ENCODE measurements at regions of chr2 and their contacts with region 1.

Region 1: GRCh38 chr2:68751397-68752339 is 17.1 kb downstream of the ARHGAP25 start:
- DNase-seq: peak; percentile 83
- H3K4me3 ChIP-seq: peak overlapping the region in 1 of 2 experiments; percentile 34; a peak in 1 of 4 replicates
- H3K27ac ChIP-seq: no peak overlapping the region
- H3K4me1 ChIP-seq: no peaks in the 10 kb centered on the region
- H3K27me3 ChIP-seq: no peaks in the 10 kb centered on the region
- CTCF ChIP-seq: peak; percentile 92
- EP300 ChIP-seq: no peak
- RAD21 ChIP-seq: peak; percentile 94

Region 2: DNA sequence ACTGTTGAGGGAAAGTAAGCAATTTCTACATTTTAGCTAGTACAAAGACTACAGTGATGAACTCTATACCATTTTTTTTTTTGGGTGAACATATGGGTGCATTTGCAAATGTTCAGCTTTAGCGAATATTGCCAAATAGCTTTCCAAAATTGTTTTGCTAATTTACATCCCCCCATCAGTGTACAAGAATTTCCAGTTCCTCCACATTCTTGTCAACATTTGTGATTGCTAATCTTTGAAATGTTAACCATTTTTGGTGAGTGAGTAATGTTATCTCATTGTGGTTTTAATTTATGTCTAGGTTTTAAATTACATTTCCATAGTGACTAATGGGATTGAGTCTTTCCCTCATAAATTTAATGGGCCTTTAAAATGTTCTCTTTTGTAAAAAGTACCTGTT is 415.5 kb before region 1 on chr2:
- CTCF ChIA-PET with region 1: no interaction called
- POLR2A ChIA-PET with region 1: no interaction called
- DNase-seq: no peak
- H3K4me3 ChIP-seq: no peak overlapping the region
- H3K27ac ChIP-seq: no peak overlapping the region
- H3K4me1 ChIP-seq: no peaks in the 10 kb centered on the region
- H3K27me3 ChIP-seq: no peaks in the 10 kb centered on the region
- CTCF ChIP-seq: no peak
- EP300 ChIP-seq: no peak
- RAD21 ChIP-seq: no peak

Region 3: GRCh38 chr2:68548396-68548795 is 203.3 kb before region 1 on chr2:
- CTCF ChIA-PET with region 1: no interaction called
- POLR2A ChIA-PET with region 1: no interaction called
- DNase-seq: no peak
- H3K4me3 ChIP-seq: no peak overlapping the region
- H3K27ac ChIP-seq: no peak overlapping the region
- H3K4me1 ChIP-seq: no peaks in the 10 kb centered on the region
- H3K27me3 ChIP-seq: no peaks in the 10 kb centered on the region
- CTCF ChIP-seq: no peak
- EP300 ChIP-seq: no peak
- RAD21 ChIP-seq: no peak

Region 4: GRCh38 chr2:68637047-68637446 is 114.6 kb before region 1 on chr2:
- CTCF ChIA-PET with region 1: no interaction called
- POLR2A ChIA-PET with region 1: no interaction called
- DNase-seq: peak; percentile 67
- H3K4me3 ChIP-seq: no peak overlapping the region
- H3K27ac ChIP-seq: peak overlapping the region in 1 of 2 experiments; percentile 48; a peak in 1 of 4 replicates
- H3K4me1 ChIP-seq: peaks cover 0 to 9% of the 10 kb centered on the region in 2 experiments; a peak in 2 of 4 replicates
- H3K27me3 ChIP-seq: peaks cover 7% of the 10 kb centered on the region; the same call in 1 of the 2 replicates
- CTCF ChIP-seq: no peak
- EP300 ChIP-seq: peak in 1 of 2 experiments; percentile 64; a peak in 1 of 4 replicates
- RAD21 ChIP-seq: peak; percentile 5; the same call in 1 of the 2 replicates

Region 5: GRCh38 chr2:68709421-68709911 is 42.2 kb before region 1 on chr2:
- CTCF ChIA-PET with region 1: interaction called, 26 read pairs
- POLR2A ChIA-PET with region 1: no interaction called
- DNase-seq: peak; percentile 52
- H3K4me3 ChIP-seq: no peak overlapping the region
- H3K27ac ChIP-seq: peak overlapping the region in 1 of 2 experiments; percentile 53; a peak in 2 of 4 replicates
- H3K4me1 ChIP-seq: peaks cover 5 to 6% of the 10 kb centered on the region in 2 experiments; a peak in 3 of 4 replicates
- H3K27me3 ChIP-seq: peaks cover 9% of the 10 kb centered on the region; the same call in 1 of the 2 replicates
- CTCF ChIP-seq: peak; percentile 76
- EP300 ChIP-seq: no peak
- RAD21 ChIP-seq: peak; percentile 72

Region 6: GRCh38 chr2:68734688-68735525 is 16.8 kb before region 1 on chr2 and contains the start of gene ARHGAP25:
- CTCF ChIA-PET with region 1: interaction called, 53 read pairs
- POLR2A ChIA-PET with region 1: no interaction called
- DNase-seq: no peak
- H3K4me3 ChIP-seq: no peak within 1 kb of the TSS
- H3K27ac ChIP-seq: no peak within 1 kb of the TSS
- H3K4me1 ChIP-seq: no peaks in the 10 kb centered on the region
- H3K27me3 ChIP-seq: no peaks in the 10 kb centered on the region
- CTCF ChIP-seq: no peak
- EP300 ChIP-seq: no peak
- RAD21 ChIP-seq: no peak
- polyA plus RNA-seq, gene ARHGAP25: not detected in 2 replicates

Region 7: DNA sequence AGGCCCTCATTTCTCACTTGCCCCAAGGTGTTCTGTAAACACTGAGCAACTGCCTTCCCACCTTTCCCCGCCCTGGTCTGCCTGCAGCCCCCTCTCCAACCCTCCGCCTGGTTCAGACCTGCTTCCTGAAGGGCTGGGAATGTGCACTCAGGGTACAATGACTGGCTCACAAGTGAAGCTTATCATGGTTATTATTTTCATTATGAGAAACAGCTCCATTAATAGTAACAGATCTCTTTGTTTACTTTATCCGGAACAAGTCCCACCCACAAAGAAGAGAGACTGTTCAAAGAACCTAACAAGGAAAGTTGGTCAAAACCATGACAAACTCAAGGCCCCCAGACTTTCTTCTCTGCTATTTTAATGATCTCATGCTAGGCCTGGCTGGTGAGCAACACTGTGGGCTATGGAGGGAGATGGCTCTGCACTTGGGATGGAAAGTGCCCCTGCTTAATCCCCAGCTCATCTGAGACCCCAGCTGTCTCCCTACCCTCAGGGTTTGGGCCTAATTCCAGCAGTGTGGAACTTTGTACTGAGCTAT is 19.6 kb after region 1 on chr2:
- CTCF ChIA-PET with region 1: interaction called, 12 read pairs
- POLR2A ChIA-PET with region 1: no interaction called
- DNase-seq: no peak
- H3K4me3 ChIP-seq: no peak overlapping the region
- H3K27ac ChIP-seq: no peak overlapping the region
- H3K4me1 ChIP-seq: peaks cover 0 to 4% of the 10 kb centered on the region in 2 experiments; a peak in 1 of 4 replicates
- H3K27me3 ChIP-seq: no peaks in the 10 kb centered on the region
- CTCF ChIP-seq: no peak
- EP300 ChIP-seq: no peak
- RAD21 ChIP-seq: no peak

Region 8: DNA sequence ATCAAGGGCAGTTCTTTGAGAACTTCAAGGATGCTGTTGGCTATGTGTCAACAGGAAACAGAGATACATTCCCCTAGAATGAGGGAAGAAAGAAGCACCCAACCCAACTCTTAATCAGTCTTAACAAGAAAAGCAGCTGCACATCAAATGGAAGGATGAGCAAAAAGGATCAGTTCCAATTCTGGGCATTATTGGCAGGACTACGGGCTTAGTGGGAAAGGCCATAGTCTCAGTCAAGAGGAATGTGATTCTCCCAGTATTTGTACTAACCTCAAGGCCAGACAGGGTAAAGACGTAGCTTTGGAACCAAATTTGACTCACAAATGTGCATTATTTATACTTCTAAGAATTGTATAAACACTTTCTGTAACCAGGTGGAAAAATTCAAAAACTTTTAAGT is 101.4 kb after region 1 on chr2:
- CTCF ChIA-PET with region 1: interaction called, 12 read pairs
- POLR2A ChIA-PET with region 1: no interaction called
- DNase-seq: no peak
- H3K4me3 ChIP-seq: no peak overlapping the region
- H3K27ac ChIP-seq: no peak overlapping the region; a peak in 1 of 4 replicates
- H3K4me1 ChIP-seq: no peaks in the 10 kb centered on the region; a peak in 1 of 4 replicates
- H3K27me3 ChIP-seq: peaks cover 13% of the 10 kb centered on the region; the same call in 1 of the 2 replicates
- CTCF ChIP-seq: no peak
- EP300 ChIP-seq: no peak
- RAD21 ChIP-seq: no peak

Region 9: DNA sequence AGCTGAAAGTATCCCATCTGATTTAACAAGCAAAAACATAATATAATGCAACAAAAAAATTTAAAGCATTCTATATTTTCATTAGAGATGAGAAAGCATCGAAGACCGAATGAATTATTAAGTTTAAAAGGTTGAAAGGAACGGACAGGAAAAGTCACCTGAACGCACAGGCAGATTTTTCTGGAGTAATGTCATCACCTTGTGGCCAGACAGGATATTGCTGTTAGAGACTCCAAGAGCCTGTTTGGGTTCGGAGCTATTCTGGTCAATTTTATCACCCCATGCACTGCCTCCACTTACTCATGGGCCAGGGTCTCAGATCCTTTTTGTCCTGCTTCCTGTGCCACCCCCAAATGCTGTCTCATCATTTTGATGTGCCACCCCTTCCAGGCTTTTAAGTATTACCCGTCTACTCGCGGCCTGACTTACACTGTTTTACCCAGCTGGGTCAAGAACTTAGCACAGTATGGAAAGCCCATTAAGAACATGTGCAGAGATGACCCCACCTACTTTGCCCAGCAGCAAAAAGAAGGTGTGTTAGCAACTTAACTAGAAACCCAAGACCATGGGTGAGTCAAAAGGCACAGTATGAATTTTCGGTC is 173.7 kb after region 1 on chr2:
- CTCF ChIA-PET with region 1: interaction called, 245 read pairs
- POLR2A ChIA-PET with region 1: no interaction called
- DNase-seq: peak; percentile 55
- H3K4me3 ChIP-seq: no peak overlapping the region; a peak in 1 of 4 replicates
- H3K27ac ChIP-seq: no peak overlapping the region
- H3K4me1 ChIP-seq: no peaks in the 10 kb centered on the region
- H3K27me3 ChIP-seq: no peaks in the 10 kb centered on the region; the same call in 1 of the 2 replicates
- CTCF ChIP-seq: peak; percentile 89
- EP300 ChIP-seq: no peak
- RAD21 ChIP-seq: peak; percentile 94

Measured in SK-N-SH (cell line).